Tibial artery (tissue), 4 donors: ENCODE measurements at regions of chr3 and their contacts with region 1.

Region 1: GRCh38 chr3:114383875-114384557 is 90.2 kb downstream of the TIGIT start:
- DNase-seq: peak; percentile 78 to 86
- H3K4me3 ChIP-seq: peak overlapping the region; percentile 52 to 53
- H3K27ac ChIP-seq: peak overlapping the region; percentile 58 to 59
- H3K4me1 ChIP-seq: peaks cover 0 to 27% (median 11%) of the 10 kb centered on the region in 4 donors
- H3K27me3 ChIP-seq: no peaks in the 10 kb centered on the region
- CTCF ChIP-seq: peak; percentile 90 to 98

Region 2: DNA sequence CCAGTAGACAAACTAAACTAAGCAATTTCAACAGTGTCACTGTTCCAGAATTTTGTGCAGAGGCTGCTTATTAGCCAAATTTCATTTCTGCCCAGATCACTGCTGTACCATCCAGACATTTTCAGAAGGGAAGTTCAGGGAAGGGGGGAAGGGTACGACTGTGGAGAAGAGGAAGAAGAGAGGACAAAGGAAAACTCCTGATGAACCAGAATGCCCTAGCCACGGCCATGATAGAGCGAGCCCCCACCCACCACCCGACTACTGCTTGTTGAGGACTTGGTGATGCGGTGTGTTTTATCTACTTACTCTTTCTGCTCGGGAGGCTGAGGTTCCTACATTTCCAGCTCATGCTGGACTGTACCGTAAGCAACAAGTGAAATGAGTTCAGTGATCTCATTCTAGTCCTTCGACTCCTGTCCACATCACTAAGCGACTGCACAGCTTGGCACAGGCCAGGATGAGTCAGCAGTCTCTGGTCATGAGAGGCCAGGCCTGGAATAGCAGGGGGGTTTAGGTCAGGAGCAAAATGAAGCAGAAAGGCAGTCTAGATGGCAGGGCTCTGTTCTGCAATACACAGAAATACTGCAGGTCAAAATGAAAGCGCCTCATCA is 240.7 kb after region 1 on chr3:
- intact Hi-C with region 1: loop called (anchors 10 kb)
- DNase-seq: peak; percentile 98
- H3K4me3 ChIP-seq: peak overlapping the region; percentile 42 to 56
- H3K27ac ChIP-seq: peak overlapping the region; percentile 75 to 82
- H3K4me1 ChIP-seq: peaks cover 0 to 66% (median 27%) of the 10 kb centered on the region in 4 donors
- H3K27me3 ChIP-seq: no peaks in the 10 kb centered on the region
- CTCF ChIP-seq: no peak

Region 3: GRCh38 chr3:115092220-115092791 is 708.3 kb after region 1 on chr3:
- intact Hi-C with region 1: loop called (anchors 10 kb)
- DNase-seq: peak; percentile 64 to 76
- H3K4me3 ChIP-seq: no peak overlapping the region
- H3K27ac ChIP-seq: no peak overlapping the region
- H3K4me1 ChIP-seq: peaks cover 0 to 29% (median 8%) of the 10 kb centered on the region in 4 donors
- H3K27me3 ChIP-seq: no peaks in the 10 kb centered on the region
- CTCF ChIP-seq: peak; percentile 75

Region 4: GRCh38 chr3:115698851-115699591 is 1315.0 kb after region 1 on chr3:
- intact Hi-C with region 1: loop called (anchors 5 kb)
- DNase-seq: no peak
- H3K4me3 ChIP-seq: no peak overlapping the region
- H3K27ac ChIP-seq: no peak overlapping the region
- H3K4me1 ChIP-seq: peaks cover 0 to 25% (median 11%) of the 10 kb centered on the region in 4 donors
- H3K27me3 ChIP-seq: no peaks in the 10 kb centered on the region
- CTCF ChIP-seq: no peak